Tibial artery (tissue), 4 donors: ENCODE measurements at regions of chr22 and their contacts with region 1.

Region 1: GRCh38 chr22:48635816-48636215 is 1191.9 kb downstream of the BRD1 start:
- DNase-seq: no peak
- H3K4me3 ChIP-seq: no peak overlapping the region
- H3K27ac ChIP-seq: no peak overlapping the region
- H3K4me1 ChIP-seq: no peaks in the 10 kb centered on the region
- H3K27me3 ChIP-seq: peaks cover 0 to 12% of the 10 kb centered on the region in 2 donors
- CTCF ChIP-seq: no peak

Region 2: GRCh38 chr22:48659404-48659996 is 23.7 kb after region 1 on chr22:
- intact Hi-C with region 1: loop called (anchors 2 kb)
- DNase-seq: no peak
- H3K4me3 ChIP-seq: no peak overlapping the region
- H3K27ac ChIP-seq: no peak overlapping the region
- H3K4me1 ChIP-seq: no peaks in the 10 kb centered on the region
- H3K27me3 ChIP-seq: peaks cover 0 to 5% of the 10 kb centered on the region in 2 donors
- CTCF ChIP-seq: no peak